ENCODE measurements at regions of chr1 and their contacts with region 1.

Region 1: DNA sequence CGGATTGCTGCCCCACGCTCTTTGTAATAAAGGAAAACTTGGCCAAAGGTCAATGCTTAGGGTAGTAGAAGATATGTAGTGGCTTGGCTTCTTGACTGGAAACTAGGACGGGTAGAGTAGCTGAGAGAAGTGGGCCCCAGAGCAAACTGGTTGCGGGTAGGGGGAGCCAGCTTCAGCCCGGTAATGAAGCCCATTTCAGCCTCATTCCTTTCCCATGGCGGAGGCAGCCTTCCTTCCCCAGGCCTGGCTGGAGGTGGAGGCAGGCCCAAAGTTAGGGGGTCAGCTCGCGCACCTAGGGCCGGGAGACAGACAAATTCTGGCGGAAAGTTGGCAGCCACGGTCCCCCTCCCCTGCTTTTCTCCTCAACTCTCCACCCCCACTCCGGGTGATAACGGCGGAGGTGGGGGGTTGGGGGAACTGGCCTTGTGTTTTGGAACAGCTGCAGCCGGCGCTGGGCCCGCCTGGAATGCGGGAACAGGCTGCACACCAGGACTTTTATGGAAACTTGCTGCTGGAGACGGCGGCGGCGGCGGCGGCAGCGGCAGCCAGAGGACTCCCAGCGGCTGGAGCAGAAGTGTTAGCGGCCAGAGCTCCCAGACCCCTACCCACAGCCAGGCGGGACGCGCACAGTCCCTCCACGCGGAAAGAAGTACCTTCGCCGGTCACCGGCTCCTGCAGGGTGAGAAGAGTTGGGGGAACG is at the start of gene NEXN:
- DNase-seq: peak; percentile 77 to 84 (median 83)
- ATAC-seq: peak; percentile 83
- H3K4me3 ChIP-seq: peak within 1 kb of the TSS; percentile 54 to 73
- H3K27ac ChIP-seq: peak within 1 kb of the TSS; percentile 82 to 89
- H3K4me1 ChIP-seq: peaks cover 0 to 10% of the 10 kb centered on the region in 2 donors
- H3K27me3 ChIP-seq: peaks cover 0 to 14% of the 10 kb centered on the region in 2 donors
- CTCF ChIP-seq: no peak
- polyA plus RNA-seq, gene NEXN: 32.0 to 45.0 (median 35.5) TPM

Region 2: DNA sequence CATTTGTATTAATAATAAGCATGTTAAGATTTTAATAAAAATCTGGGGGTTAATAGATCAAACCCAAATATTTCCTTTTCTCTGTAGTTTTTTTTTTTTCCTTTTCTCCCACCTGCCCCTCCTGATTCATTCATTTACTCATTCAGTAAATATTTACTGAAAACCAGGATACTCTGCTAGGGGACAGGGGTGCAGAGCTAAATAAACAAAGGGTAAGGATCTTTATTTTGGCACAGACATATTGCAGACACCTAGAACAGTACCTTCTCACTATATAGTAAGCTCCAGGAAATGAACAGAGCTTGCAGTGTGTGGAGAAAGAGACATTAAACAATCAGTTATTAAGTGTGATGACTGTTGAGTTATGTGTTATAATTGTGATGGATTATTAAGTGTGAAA is 545.5 kb before region 1 on chr1:
- intact Hi-C with region 1: no loop called
- DNase-seq: no peak
- ATAC-seq: no peak
- H3K4me3 ChIP-seq: no peak overlapping the region
- H3K27ac ChIP-seq: no peak overlapping the region
- H3K4me1 ChIP-seq: no peaks in the 10 kb centered on the region
- H3K27me3 ChIP-seq: no peaks in the 10 kb centered on the region
- CTCF ChIP-seq: no peak

Region 3: DNA sequence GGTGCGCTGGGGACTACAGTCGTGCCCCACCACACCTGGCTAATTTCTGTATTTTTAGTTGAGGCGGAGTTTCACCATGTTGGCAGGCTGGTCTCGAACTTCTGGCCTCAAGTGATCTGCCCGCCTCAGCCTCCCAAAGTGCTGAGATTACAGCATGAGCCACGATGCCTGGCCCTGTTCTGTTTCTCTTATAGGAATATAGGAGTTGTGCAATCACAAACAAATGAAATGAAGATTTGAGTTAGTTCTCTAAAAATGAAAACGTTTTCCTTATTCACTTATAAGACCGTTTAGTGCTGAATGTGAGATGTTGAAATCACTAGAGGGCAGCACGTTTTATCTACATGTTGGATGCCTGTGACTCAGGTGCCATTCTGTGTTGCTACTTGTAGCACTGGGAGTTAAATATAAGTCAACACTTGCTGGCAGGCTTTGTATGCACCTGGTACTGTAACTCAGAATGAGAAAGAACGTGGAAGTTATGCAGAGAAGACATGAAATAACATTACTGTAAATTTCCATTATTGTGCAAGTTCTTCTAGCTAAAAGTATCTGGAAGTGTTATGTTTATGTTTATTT is 63.0 kb before region 1 on chr1:
- intact Hi-C with region 1: loop called in 1 of 2 experiments (anchors 10 kb)
- DNase-seq: peak in 2 of 4 donors; percentile 50 to 70
- ATAC-seq: peak; percentile 97
- H3K4me3 ChIP-seq: no peak overlapping the region
- H3K27ac ChIP-seq: peak overlapping the region in 1 of 2 donors; percentile 53
- H3K4me1 ChIP-seq: peaks cover 0 to 12% of the 10 kb centered on the region in 2 donors
- H3K27me3 ChIP-seq: no peaks in the 10 kb centered on the region
- CTCF ChIP-seq: peak in 1 of 2 donors; percentile 24